ENCODE measurements at regions of chr19 and their contacts with region 1.

Region 1: GRCh38 chr19:44113138-44113783 is at the start of gene ZNF225:
- DNase-seq: peak; percentile 95
- ATAC-seq: peak; percentile 100
- total RNA-seq, gene ZNF225: 3.0 TPM

Region 2: DNA sequence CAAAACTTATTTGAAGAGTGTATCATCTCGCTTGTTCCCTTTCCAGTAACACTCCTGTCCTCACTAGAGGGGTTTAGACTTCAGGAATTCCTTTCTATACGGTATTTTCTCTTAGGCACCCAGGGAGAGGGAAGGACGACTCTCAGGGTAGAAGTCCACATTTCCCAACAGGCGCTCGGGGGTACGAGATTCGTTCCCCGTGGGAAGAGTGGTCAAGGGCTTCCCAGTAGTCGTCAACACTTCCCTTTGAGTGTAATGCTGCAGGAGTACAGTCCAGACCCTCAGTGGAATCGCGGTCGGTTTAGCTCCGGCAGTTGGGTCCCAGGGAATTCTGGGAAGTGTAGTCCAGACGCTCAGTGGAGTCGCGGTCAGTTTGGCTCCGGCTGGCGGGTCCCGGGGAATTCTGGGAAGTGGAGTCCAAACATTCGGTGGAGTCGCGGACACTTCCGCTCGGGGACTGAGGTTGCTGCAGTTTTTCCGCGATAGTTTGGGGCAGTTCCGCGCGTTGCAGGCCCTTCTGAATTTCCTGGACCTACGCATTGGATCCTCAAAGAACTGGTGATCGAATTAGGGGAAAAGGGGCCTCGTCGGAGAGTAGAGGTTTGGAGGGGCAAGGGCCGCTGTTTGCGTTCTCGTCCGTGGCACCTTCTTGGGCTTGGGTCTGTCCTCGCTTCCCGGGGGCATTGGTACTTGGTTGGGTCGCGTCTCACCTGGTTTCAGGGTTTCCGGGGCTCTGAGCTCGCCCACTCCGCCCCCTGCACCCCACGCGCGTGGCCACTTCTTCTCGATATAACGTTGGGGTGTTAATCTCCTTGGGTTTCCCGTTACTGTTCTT is 19.1 kb before region 1 on chr19 and contains the start of gene ZNF224:
- intact Hi-C with region 1: loop called (anchors 1 kb)
- DNase-seq: peak; percentile 93
- ATAC-seq: peak; percentile 98
- total RNA-seq, gene ZNF224: 10.2 TPM

Region 3: GRCh38 chr19:44141191-44142058 is 28.2 kb after region 1 on chr19 and contains the start of gene ZNF234:
- intact Hi-C with region 1: loop called (anchors 2 kb)
- DNase-seq: peak; percentile 87
- ATAC-seq: peak; percentile 97
- total RNA-seq, gene ZNF234: 9.4 TPM

Region 4: DNA sequence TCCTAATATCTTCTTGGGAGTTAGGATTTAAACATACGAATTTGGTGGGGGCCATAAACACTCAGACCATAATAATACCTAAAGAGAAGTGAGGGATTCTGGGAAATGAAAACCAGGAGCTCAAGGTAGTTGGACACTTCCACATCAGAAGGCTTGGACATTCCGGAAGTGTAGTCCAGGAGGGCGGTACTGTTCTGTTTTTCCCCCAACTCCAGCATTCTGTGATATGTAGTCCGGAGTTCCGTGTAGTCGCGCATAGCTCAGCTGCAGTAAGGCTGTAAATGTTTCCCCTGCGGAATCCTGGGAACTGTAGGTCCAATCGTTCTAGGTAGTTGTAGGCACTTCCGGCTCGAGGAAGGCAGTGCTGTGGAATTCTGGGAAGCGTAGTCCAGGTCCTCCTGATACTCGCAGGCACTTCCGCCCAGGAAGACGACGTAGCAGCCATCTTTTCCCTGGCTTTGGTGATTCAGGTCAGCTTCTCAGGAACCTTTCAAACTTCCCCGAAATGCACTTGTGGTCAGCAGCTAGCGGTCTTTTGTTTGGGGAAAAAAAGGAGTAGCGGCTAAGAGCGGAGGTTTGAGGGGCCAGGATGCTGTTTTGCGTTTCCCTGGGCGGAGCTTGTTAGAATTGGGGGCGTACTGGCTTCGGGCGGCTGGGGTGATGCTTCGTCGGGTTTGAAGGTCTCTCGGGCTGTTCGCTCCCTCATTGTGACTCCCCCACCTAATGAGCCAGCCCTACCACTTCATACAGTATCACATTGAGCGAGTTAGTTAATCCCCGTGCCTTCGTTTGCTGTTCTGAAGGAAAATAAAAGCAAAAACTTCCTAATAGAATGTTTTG is 51.6 kb after region 1 on chr19 and contains the start of gene ZNF226:
- intact Hi-C with region 1: loop called (anchors 2 kb)
- DNase-seq: peak; percentile 89
- ATAC-seq: peak; percentile 99
- total RNA-seq, gene ZNF226: 15.7 TPM

Region 5: GRCh38 chr19:44207126-44207803 is 94.0 kb after region 1 on chr19:
- intact Hi-C with region 1: loop called (anchors 5 kb)
- DNase-seq: peak; percentile 90
- ATAC-seq: peak; percentile 96

Region 6: DNA sequence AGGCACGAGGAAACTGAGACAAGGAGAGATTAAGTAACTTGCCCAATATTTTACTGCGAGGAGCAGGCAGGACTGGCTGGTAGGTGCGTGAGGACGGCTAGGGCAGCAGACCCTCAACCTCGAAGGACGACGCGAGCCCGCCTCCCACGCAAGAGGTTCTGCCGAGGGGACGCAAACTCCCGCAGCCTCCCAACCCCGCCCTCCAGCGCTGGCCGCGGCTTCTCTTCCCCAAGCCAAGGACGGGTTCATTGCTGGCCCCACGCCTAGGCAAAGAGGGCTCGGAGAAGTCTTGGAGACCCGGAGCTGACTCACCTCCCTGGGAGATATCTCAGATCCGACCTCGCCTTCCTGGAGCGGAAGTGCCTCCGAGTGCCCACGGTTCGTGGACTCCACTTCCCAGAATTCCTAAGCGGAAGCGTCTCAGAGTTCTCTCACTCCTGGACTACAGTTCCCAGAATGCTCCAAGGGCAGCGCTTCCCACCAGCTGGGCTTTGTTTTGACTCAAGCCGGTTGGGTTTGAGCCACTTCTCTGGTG is 191.5 kb after region 1 on chr19 and contains the start of gene ZNF235:
- intact Hi-C with region 1: loop called (anchors 10 kb)
- DNase-seq: peak; percentile 92
- ATAC-seq: peak; percentile 100
- total RNA-seq, gene ZNF235: 4.2 TPM